Activated CD4-positive, alpha-beta memory T cell treated with anti-CD3 and anti-CD28 coated beads, Interleukin-2, amount 10 ng/mL, durations not matched to agents 7 days and 5 days (primary cell): ENCODE measurements at regions of chr9 and their contacts with region 1.

Region 1: DNA sequence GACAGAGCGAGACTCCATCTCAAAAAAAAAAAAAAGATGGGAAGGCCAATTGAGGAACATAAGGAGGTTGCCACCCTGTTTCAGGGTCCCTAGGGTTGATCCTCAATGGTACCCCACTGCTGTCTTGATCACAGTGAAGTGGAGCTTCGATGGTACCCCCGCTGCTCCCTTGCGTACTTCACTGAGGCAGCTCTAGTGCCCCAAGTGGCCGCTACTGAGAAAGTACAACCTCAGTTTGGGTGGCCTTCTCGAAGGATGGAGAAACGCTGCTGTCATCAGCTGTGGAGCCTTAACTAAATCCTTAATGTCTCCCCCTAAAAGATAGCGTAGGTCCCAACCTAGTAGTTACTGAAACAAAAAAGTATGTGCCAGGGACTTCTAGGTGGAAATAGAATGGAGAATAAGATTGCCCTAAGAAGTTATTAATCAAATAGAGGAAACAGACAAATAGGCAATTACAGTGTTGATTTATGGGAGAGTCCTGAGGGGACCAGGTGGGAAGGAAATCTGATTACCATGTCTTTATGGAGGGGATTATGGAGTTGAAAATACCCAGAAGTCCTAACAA is 6.3 kb downstream of the TESK1 start:
- DNase-seq: peak; percentile 61
- H3K4me3 Mint-ChIP-seq: no peak overlapping the region
- H3K27ac Mint-ChIP-seq: no peak overlapping the region
- H3K4me1 Mint-ChIP-seq: peaks cover 16% of the 10 kb centered on the region
- H3K27me3 Mint-ChIP-seq: peaks cover 3% of the 10 kb centered on the region

Region 2: GRCh38 chr9:35526087-35526801 is 85.1 kb before region 1 on chr9:
- CTCF ChIA-PET with region 1: no interaction called
- POLR2A ChIA-PET with region 1: no interaction called
- DNase-seq: no peak
- H3K4me3 Mint-ChIP-seq: no peak overlapping the region
- H3K27ac Mint-ChIP-seq: no peak overlapping the region
- H3K4me1 Mint-ChIP-seq: peaks cover under 1% of the 10 kb centered on the region
- H3K27me3 Mint-ChIP-seq: no peaks in the 10 kb centered on the region

Region 3: GRCh38 chr9:35628389-35628991 is 17.2 kb after region 1 on chr9:
- CTCF ChIA-PET with region 1: interaction called, 40 read pairs
- POLR2A ChIA-PET with region 1: no interaction called
- DNase-seq: no peak
- H3K4me3 Mint-ChIP-seq: no peak overlapping the region
- H3K27ac Mint-ChIP-seq: no peak overlapping the region
- H3K4me1 Mint-ChIP-seq: no peaks in the 10 kb centered on the region
- H3K27me3 Mint-ChIP-seq: peaks cover 4% of the 10 kb centered on the region